ENCODE measurements at regions of chr4 and their contacts with region 1.

Region 1: DNA sequence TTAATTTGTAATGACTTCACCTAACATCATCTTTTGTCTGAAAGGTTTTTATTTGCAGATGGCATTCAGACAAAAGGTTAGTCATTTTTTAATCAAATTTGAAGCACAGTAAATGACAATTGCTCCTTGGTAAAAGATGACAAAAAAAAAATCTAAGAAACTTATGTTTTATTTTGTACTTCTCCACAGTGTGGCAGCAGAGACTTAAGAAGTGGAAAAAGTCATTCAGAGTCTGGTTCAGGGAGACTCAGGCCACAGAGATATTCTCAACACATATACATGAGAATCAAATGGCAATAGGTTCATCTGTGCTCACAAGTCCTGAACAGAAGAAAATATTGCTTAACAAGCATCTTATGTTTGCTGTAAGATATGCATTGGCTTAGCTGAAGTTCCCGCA is 436.2 kb downstream of the KCNIP4 start:
- DNase-seq: peak in 1 of 10 donors; percentile 20
- H3K4me3 ChIP-seq: no peak overlapping the region
- H3K27ac ChIP-seq: no peak overlapping the region
- H3K27me3 ChIP-seq: no peaks in the 10 kb centered on the region
- CTCF ChIP-seq: peak; percentile 13 to 89 (median 68)

Region 2: DNA sequence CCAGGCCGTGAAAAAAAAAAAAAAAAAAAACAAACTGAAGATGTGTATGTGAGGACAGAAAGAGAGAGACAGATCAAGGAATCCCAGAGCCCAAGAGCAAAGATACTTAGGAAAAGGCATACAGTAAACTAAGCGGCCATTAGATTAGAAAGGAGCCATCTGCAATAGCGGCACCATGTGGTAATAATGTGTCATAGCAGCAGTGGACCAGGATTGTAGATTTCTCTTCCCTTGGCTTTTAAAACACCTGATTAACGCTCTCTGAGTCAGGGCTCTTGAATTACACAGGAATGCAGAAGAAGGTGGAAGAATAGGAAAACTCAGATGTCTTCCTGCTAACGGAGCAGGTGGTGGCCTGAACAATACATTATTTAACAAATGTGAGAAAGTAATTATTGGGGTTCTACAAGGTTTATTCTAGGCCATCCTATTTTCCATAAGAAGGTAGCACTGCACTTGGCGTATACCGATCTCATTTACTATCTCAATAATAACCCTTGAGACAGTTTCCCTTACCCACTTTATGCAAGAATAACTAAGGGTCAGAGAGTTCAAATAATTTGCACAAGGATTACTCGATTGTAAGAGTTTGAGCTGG is 253.6 kb after region 1 on chr4:
- intact Hi-C with region 1: loop called (anchors 2 kb)
- DNase-seq: peak in 3 of 10 donors; percentile 28 to 59 (median 36)
- H3K4me3 ChIP-seq: no peak overlapping the region
- H3K27ac ChIP-seq: no peak overlapping the region
- H3K27me3 ChIP-seq: no peaks in the 10 kb centered on the region
- CTCF ChIP-seq: peak; percentile 61 to 90 (median 84)